Activated CD4-positive, alpha-beta T cell treated with anti-CD3 and anti-CD28 coated beads for 36 hours (primary cell): ENCODE measurements at regions of chr3 and their contacts with region 1.

Region 1: DNA sequence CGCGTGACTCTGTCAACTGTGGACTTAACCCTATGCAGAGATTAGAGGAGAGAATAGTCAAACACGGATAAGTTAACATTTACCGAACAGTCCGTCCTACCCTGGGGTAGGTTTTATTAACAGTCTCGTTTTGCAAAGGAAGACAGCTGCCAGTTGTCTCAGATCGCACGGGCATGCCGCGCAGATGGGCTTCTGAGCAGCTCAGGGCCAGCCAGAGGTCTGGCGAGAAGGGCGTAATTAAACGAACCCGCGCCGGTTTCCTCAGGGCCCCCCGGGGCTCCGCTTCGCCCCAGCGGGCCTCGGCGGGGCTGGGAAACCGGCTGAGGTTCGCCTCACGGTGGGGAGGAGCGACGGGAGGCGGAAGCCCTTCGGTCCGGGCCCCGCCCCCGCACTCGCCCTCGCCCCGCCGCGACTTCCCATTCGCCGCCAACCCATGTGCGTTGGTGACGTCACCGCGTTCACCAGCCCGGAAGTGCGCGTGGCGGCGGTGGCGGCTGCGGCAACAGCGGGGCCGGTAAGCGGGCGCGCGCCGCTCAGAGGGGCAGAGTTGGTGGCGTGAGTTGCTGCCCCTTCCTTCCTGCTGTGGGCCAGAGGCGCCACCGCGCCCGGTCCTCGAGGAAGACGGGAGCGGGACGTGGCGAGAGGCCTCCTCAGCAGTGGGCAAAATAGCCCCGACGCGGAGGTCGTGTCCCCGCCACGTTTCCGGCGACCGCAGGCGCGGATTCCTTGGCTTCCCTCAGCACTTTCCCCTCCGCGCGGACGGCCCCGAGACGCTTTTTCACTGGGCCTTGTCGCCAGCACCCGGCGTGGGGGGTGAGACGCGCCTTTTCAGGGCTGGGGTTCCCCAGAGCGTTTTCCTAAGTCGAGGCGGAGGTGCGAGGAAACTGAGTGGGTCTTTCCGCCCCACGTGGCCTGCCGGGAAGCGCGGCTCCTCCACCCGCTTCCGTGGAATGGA is at the start of gene TRNT1:
- DNase-seq: peak; percentile 98
- ATAC-seq: peak; percentile 91
- H3K4me3 Mint-ChIP-seq: peak within 1 kb of the TSS; percentile 99
- H3K27ac Mint-ChIP-seq: peak within 1 kb of the TSS; percentile 99
- H3K4me1 Mint-ChIP-seq: peaks cover 30% of the 10 kb centered on the region
- H3K27me3 Mint-ChIP-seq: no peaks in the 10 kb centered on the region
- total RNA-seq, gene TRNT1: 51.4 to 58.2 TPM

Region 2: DNA sequence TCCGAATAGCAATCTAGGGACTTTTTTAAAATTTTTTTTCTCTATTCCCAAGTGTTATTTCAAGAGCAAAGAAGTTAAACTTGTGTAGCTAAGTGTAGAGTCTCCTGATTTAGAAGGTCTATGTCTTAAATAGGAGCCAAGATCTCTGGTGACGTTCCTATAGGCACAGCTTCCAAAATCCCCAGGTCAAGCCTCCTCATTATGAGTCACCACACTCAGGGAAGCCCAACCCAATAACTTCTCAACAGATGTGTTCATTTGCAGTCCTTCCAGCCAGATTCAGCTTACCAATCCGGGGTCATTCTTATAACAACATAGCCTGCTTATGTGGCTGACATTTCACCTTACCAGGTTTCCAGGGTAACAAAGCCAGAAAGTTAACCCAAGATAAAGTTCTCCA is 286.9 kb before region 1 on chr3:
- CTCF ChIA-PET with region 1: no interaction called
- POLR2A ChIA-PET with region 1: no interaction called
- intact Hi-C with region 1: no loop called
- DNase-seq: no peak
- ATAC-seq: no peak
- H3K4me3 Mint-ChIP-seq: no peak overlapping the region
- H3K27ac Mint-ChIP-seq: no peak overlapping the region
- H3K4me1 Mint-ChIP-seq: no peaks in the 10 kb centered on the region
- H3K27me3 Mint-ChIP-seq: peaks cover 2% of the 10 kb centered on the region

Region 3: GRCh38 chr3:3027976-3028567 is 98.7 kb before region 1 on chr3:
- CTCF ChIA-PET with region 1: no interaction called
- POLR2A ChIA-PET with region 1: no interaction called
- intact Hi-C with region 1: loop called in 1 of 2 experiments (anchors 5 kb)
- DNase-seq: no peak
- ATAC-seq: peak; percentile 86
- H3K4me3 Mint-ChIP-seq: no peak overlapping the region
- H3K27ac Mint-ChIP-seq: no peak overlapping the region
- H3K4me1 Mint-ChIP-seq: peaks cover 13% of the 10 kb centered on the region
- H3K27me3 Mint-ChIP-seq: peaks cover 2% of the 10 kb centered on the region

Region 4: GRCh38 chr3:3200632-3201212 is 74.0 kb after region 1 on chr3:
- CTCF ChIA-PET with region 1: no interaction called
- POLR2A ChIA-PET with region 1: no interaction called
- intact Hi-C with region 1: no loop called
- DNase-seq: peak; percentile 53
- ATAC-seq: no peak
- H3K4me3 Mint-ChIP-seq: no peak overlapping the region
- H3K27ac Mint-ChIP-seq: no peak overlapping the region
- H3K4me1 Mint-ChIP-seq: peaks cover 14% of the 10 kb centered on the region
- H3K27me3 Mint-ChIP-seq: no peaks in the 10 kb centered on the region

Region 5: GRCh38 chr3:4303187-4304123 is 1176.7 kb after region 1 on chr3 and contains the start of gene SETMAR:
- CTCF ChIA-PET with region 1: no interaction called
- POLR2A ChIA-PET with region 1: no interaction called
- intact Hi-C with region 1: loop called in 1 of 2 experiments (anchors 1 kb)
- DNase-seq: peak; percentile 93
- ATAC-seq: peak; percentile 96
- H3K4me3 Mint-ChIP-seq: peak within 1 kb of the TSS; percentile 79
- H3K27ac Mint-ChIP-seq: peak within 1 kb of the TSS; percentile 96
- H3K4me1 Mint-ChIP-seq: peaks cover 26% of the 10 kb centered on the region
- H3K27me3 Mint-ChIP-seq: no peaks in the 10 kb centered on the region
- total RNA-seq, gene SETMAR: 19.3 to 19.4 TPM